Lower leg skin (tissue), 4 donors: ENCODE measurements at regions of chrX and their contacts with region 1.

Region 1: DNA sequence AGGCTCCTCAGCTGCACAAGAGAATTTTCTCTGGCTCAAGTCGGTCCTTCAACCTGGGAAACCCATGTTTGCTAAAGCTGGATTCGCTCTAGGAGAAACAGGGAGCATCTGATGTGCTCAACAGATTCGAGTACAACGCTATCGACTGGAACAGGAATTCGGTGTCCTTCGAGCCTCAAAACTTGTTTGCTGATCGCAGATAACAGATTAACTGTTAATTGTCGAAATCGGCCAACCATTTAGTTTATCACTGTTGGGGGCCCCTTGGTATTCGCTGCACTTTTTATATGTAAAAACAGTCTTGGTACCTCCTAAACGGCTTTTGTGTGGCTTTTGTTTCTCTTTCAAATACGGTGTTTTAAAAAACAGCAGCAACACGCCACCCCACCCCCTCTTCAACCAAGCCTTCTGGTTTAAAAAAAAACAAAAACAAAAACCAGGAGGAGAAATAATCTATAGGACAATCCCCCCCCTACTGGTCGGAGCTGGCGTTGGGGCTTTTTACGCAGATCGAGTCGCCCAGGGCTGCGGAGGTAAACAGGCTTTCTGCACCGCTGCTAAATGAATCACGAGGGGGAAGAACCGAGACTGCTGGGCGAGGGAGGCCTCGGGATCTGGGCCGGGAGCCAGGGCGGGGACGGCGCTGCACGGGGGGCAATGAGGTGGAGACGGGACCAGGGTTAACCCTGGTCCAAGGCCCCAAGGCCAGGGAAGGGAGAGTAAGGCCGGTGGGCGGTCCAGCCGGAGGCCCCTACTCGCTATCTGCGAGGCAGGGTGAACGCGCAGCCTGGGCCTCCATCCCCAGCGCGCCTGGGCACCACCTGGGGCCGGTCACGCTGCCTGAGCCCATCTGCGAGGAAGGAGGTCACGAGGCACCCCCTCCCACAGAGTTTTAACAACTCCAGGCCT is 71.7 kb upstream of the BCOR start:
- DNase-seq: no peak
- H3K4me3 ChIP-seq: no peak overlapping the region
- CTCF ChIP-seq: no peak
- POLR2A ChIP-seq: no peak

Region 2: GRCh38 chrX:39859991-39860861 is 309.2 kb before region 1 on chrX:
- intact Hi-C with region 1: no loop called
- DNase-seq: no peak
- H3K4me3 ChIP-seq: no peak overlapping the region
- CTCF ChIP-seq: no peak
- POLR2A ChIP-seq: no peak

Region 3: DNA sequence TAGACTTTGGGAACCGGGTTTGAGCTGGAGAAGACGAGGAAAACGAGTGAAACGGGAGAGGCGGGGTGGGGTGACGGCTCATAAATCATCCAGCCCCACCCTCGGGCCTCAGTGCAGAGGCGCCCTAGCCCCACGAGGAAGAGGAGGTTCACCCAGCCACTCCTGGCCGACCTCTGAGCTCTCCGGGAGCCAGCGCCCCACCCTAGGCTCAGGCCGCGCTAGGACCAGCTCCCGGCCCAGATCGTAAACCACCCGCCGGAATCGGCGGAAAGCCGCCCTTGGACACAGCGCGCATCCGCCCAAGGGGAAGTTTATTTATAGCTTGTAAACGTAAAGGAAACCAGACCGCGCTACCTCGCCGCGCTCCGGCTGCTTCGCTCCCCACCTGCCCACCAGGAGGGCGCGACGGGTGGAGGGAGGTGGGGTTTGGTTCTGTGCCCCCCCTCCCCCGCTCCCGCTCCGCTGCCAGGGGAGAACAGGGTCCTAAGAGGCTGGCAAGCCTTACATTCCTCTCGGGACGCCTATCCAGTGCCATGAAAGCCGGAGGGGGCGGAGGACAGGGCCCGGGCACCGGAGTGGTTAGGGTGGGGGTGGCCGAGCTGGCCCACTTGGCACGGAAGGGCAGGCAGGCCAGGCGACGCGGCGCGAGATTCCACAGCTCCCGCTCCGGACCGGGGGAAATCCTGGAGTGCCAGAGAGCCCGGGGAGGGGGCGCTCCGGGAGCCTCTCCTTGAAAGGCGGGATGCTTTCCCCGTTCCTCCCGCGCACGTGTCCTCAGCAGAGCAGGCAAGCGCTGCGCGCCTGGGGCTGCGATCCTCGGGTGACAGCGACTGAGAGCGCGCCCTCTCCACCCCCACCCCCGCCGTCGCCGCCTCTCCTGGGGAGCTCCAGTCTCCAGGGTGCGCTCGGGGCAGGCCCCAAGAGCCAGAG is 155.9 kb before region 1 on chrX:
- intact Hi-C with region 1: loop called (anchors 5 kb)
- DNase-seq: peak; percentile 40 to 92
- H3K4me3 ChIP-seq: peak overlapping the region; percentile 9
- CTCF ChIP-seq: no peak
- POLR2A ChIP-seq: no peak

Region 4: GRCh38 chrX:40736170-40736505 is 566.7 kb after region 1 on chrX:
- intact Hi-C with region 1: no loop called
- DNase-seq: no peak
- H3K4me3 ChIP-seq: peak overlapping the region; percentile 66
- CTCF ChIP-seq: no peak
- POLR2A ChIP-seq: no peak